CD4-positive, alpha-beta memory T cell (primary cell): ENCODE measurements at regions of chr1 and their contacts with region 1.

Region 1: GRCh38 chr1:202926720-202927491 is at the start of gene KLHL12:
- DNase-seq: peak; percentile 93 to 95 (median 94)
- H3K4me3 ChIP-seq: peak within 1 kb of the TSS; percentile 88 to 98
- H3K4me3 Mint-ChIP-seq: peak within 1 kb of the TSS; percentile 90 to 97 (median 96)
- H3K27ac ChIP-seq: peak within 1 kb of the TSS; percentile 87
- H3K27ac Mint-ChIP-seq: peak within 1 kb of the TSS; percentile 96 to 98 (median 97)
- H3K4me1 ChIP-seq: peaks cover 34% of the 10 kb centered on the region
- H3K4me1 Mint-ChIP-seq: peaks cover 15 to 40% (median 28%) of the 10 kb centered on the region in 4 donors
- H3K27me3 ChIP-seq: no peaks in the 10 kb centered on the region
- H3K27me3 Mint-ChIP-seq: no peaks in the 10 kb centered on the region
- total RNA-seq, gene KLHL12: 24.2 to 27.1 TPM

Region 2: GRCh38 chr1:201108614-201109013 is 1818.3 kb before region 1 on chr1:
- CTCF ChIA-PET with region 1: no interaction called
- POLR2A ChIA-PET with region 1: no interaction called
- intact Hi-C with region 1: no loop called
- DNase-seq: no peak
- H3K4me3 ChIP-seq: no peak overlapping the region
- H3K4me3 Mint-ChIP-seq: no peak overlapping the region
- H3K27ac ChIP-seq: no peak overlapping the region
- H3K27ac Mint-ChIP-seq: peak overlapping the region in 1 of 7 donors; percentile 36
- H3K4me1 ChIP-seq: no peaks in the 10 kb centered on the region
- H3K4me1 Mint-ChIP-seq: peaks cover 0 to 5% (median under 1%) of the 10 kb centered on the region in 4 donors
- H3K27me3 ChIP-seq: no peaks in the 10 kb centered on the region
- H3K27me3 Mint-ChIP-seq: no peaks in the 10 kb centered on the region

Region 3: GRCh38 chr1:202861420-202862200 is 65.3 kb before region 1 on chr1:
- CTCF ChIA-PET with region 1: no interaction called
- POLR2A ChIA-PET with region 1: no interaction called
- intact Hi-C with region 1: no loop called
- DNase-seq: peak in 3 of 5 donors; percentile 6 to 14 (median 8)
- H3K4me3 ChIP-seq: peak overlapping the region; percentile 42 to 75
- H3K4me3 Mint-ChIP-seq: peak overlapping the region; percentile 73 to 87 (median 82)
- H3K27ac ChIP-seq: no peak overlapping the region
- H3K27ac Mint-ChIP-seq: peak overlapping the region in 2 of 7 donors; percentile 25 to 45
- H3K4me1 ChIP-seq: peaks cover 15% of the 10 kb centered on the region
- H3K4me1 Mint-ChIP-seq: peaks cover 6 to 23% (median 10%) of the 10 kb centered on the region in 4 donors
- H3K27me3 ChIP-seq: peaks cover 21% of the 10 kb centered on the region
- H3K27me3 Mint-ChIP-seq: peaks cover 42 to 45% of the 10 kb centered on the region in 2 donors

Region 4: DNA sequence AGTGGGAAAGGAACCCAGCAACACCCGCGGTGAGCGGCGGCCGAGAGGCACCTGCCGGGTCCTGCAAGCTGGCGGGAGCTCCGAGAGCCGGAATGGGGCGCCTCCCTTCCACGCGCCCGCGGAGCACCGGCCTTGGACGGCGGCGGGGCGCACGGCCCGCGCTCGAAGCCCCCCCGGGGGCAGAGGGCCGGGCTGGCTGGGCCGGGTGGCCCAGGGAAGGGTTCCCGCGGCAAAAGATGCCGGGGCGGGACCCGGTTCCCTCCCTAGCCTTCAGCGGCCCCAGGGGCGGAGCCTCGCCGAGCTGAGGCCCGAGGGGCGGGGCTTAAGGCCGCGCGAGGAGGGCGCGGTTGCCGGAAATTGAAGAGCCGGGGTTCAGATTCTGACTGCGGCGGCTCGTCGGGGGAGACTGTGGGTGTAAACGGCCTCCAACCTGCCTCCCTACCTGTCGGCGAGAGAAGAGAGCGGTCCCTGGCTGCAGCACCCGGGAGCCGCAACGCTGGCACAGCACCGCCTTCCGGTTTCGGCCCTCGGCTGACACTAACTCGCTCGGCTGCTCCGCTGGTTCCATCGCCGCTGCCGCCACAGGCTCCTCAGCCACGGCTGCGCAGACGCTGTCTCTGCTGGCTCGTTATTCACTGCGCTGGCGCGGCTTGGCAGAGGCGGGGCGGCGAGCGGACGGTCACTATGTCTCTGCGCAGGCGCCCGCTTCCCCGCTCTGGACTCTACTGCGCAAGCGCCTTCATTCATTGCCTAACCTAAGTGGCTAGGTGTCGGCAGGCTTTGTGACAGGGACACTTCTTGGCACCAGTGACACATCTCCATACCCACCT is 38.2 kb before region 1 on chr1 and contains the start of gene RABIF:
- CTCF ChIA-PET with region 1: no interaction called
- POLR2A ChIA-PET with region 1: interaction called, 8 read pairs
- intact Hi-C with region 1: loop called (anchors 1 kb)
- DNase-seq: peak; percentile 95 to 97 (median 97)
- H3K4me3 ChIP-seq: peak within 1 kb of the TSS; percentile 93 to 95
- H3K4me3 Mint-ChIP-seq: peak within 1 kb of the TSS; percentile 93 to 99 (median 97)
- H3K27ac ChIP-seq: peak within 1 kb of the TSS; percentile 73
- H3K27ac Mint-ChIP-seq: peak within 1 kb of the TSS; percentile 89 to 99 (median 97)
- H3K4me1 ChIP-seq: peaks cover 21% of the 10 kb centered on the region
- H3K4me1 Mint-ChIP-seq: peaks cover 13 to 38% (median 26%) of the 10 kb centered on the region in 4 donors
- H3K27me3 ChIP-seq: no peaks in the 10 kb centered on the region
- H3K27me3 Mint-ChIP-seq: no peaks in the 10 kb centered on the region
- total RNA-seq, gene RABIF: 17.3 to 18.7 TPM

Region 5: DNA sequence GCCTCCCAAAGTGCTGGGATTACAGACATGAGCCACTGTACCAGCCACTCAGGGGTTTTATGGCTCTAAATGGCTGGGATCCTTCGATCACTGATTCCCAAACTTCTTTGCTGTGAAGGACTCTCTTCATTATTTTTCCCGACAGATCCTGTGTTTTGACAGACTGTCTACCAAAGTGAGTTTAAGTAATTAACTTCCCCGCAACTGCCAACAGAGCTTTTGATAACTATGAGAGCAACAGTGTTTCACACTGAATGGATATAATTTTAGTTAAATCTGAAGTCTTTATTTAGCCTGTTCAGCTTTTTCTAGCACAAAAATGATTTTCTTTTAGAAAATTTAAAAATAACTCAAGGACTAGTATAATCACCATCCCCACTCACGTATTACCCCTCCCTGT is 25.4 kb before region 1 on chr1:
- CTCF ChIA-PET with region 1: no interaction called
- POLR2A ChIA-PET with region 1: no interaction called
- intact Hi-C with region 1: no loop called
- DNase-seq: no peak
- H3K4me3 ChIP-seq: no peak overlapping the region
- H3K4me3 Mint-ChIP-seq: no peak overlapping the region
- H3K27ac ChIP-seq: no peak overlapping the region
- H3K27ac Mint-ChIP-seq: no peak overlapping the region
- H3K4me1 ChIP-seq: no peaks in the 10 kb centered on the region
- H3K4me1 Mint-ChIP-seq: peaks cover 0 to 1% (median 0%) of the 10 kb centered on the region in 4 donors
- H3K27me3 ChIP-seq: no peaks in the 10 kb centered on the region
- H3K27me3 Mint-ChIP-seq: no peaks in the 10 kb centered on the region

Region 6: GRCh38 chr1:202952818-202953217 is 25.9 kb after region 1 on chr1:
- CTCF ChIA-PET with region 1: interaction called, 10 read pairs
- POLR2A ChIA-PET with region 1: interaction called, 8 read pairs
- intact Hi-C with region 1: loop called (anchors 1 kb)
- DNase-seq: no peak
- H3K4me3 ChIP-seq: no peak overlapping the region
- H3K4me3 Mint-ChIP-seq: peak overlapping the region in 2 of 8 donors; percentile 2 to 37
- H3K27ac ChIP-seq: no peak overlapping the region
- H3K27ac Mint-ChIP-seq: peak overlapping the region in 3 of 7 donors; percentile 20 to 65 (median 56)
- H3K4me1 ChIP-seq: peaks cover 59% of the 10 kb centered on the region
- H3K4me1 Mint-ChIP-seq: peaks cover 31 to 68% (median 53%) of the 10 kb centered on the region in 4 donors
- H3K27me3 ChIP-seq: no peaks in the 10 kb centered on the region
- H3K27me3 Mint-ChIP-seq: no peaks in the 10 kb centered on the region

Region 7: DNA sequence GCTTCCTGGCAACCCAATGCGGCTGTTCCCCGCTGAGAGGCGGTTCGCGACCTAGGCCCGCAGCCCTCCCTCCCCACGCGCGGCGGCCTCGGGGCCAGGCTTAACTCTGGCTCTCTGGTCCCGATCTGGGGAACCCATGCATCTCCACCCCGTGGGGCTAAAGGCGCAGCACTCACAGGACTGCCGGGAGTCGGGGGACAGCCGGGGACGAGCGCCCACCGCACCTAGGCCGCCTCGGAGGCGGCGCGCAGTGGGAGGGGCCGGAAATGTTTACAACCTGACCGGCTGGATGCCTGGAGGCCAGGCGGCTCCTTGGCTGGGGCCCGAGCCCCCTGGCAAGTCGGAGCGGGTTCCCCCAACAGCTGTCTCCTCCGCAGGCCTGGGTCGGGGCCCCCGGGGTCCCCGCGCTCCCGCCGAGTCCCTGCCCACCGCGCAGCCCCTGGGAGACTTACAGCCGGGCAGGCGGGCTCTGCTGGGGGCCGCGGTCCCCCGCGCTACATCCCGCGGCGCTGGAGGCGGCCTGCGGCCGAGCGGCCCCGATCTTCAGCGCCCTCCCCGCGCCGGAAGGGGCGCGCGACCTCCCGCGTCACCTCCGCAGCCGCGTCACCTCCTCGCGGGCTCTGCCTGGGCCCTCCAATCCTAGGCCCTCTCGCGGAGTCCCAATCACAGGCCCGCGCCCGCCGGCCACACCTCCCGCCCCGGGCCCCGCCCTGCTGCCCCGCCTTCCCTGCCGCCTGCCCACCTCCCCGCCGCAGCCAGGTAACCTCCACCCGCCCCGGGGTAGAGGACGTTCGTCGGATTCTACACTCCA is 31.0 kb after region 1 on chr1 and contains the start of gene ADIPOR1:
- CTCF ChIA-PET with region 1: interaction called, 10 read pairs
- POLR2A ChIA-PET with region 1: interaction called, 8 read pairs
- intact Hi-C with region 1: loop called (anchors 1 kb)
- DNase-seq: peak; percentile 93 to 94 (median 94)
- H3K4me3 ChIP-seq: peak within 1 kb of the TSS; percentile 44 to 78
- H3K4me3 Mint-ChIP-seq: peak within 1 kb of the TSS; percentile 89 to 97 (median 94)
- H3K27ac ChIP-seq: peak within 1 kb of the TSS; percentile 94
- H3K27ac Mint-ChIP-seq: peak within 1 kb of the TSS; percentile 91 to 99 (median 97)
- H3K4me1 ChIP-seq: peaks cover 54% of the 10 kb centered on the region
- H3K4me1 Mint-ChIP-seq: peaks cover 30 to 55% (median 47%) of the 10 kb centered on the region in 4 donors
- H3K27me3 ChIP-seq: no peaks in the 10 kb centered on the region
- H3K27me3 Mint-ChIP-seq: no peaks in the 10 kb centered on the region
- total RNA-seq, gene ADIPOR1: 52.6 to 58.3 TPM

Region 8: DNA sequence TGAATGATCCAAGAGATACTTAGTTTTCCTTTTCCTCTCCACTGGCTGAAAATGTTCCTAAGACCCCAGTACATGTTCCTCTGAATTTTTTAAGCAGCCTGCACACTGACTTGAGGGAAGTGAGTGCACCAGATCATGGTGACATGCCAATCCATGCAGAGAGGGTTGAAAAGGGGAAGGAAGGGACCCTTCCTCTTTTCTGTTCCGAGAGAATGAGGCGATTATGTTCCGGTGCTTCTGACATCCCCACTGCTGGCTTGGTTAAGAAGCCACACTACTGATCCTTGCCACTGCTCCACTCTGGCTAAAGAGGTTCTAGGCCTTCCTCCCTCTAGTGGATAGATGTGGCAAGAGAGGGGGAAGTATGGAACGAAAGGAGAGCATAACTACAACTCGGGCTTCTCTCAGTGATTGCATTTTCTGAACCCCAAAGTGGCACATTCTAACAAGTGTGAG is 42.0 kb after region 1 on chr1:
- CTCF ChIA-PET with region 1: interaction called, 6 read pairs
- POLR2A ChIA-PET with region 1: interaction called, 7 read pairs
- intact Hi-C with region 1: loop called (anchors 1 kb)
- DNase-seq: peak; percentile 21 to 59 (median 29)
- H3K4me3 ChIP-seq: no peak overlapping the region
- H3K4me3 Mint-ChIP-seq: peak overlapping the region in 5 of 8 donors; percentile 9 to 68 (median 35)
- H3K27ac ChIP-seq: peak overlapping the region; percentile 52
- H3K27ac Mint-ChIP-seq: peak overlapping the region; percentile 3 to 87 (median 75)
- H3K4me1 ChIP-seq: peaks cover 29% of the 10 kb centered on the region
- H3K4me1 Mint-ChIP-seq: peaks cover 14 to 36% (median 22%) of the 10 kb centered on the region in 4 donors
- H3K27me3 ChIP-seq: no peaks in the 10 kb centered on the region
- H3K27me3 Mint-ChIP-seq: no peaks in the 10 kb centered on the region

Region 9: GRCh38 chr1:202998836-202999750 is 72.2 kb after region 1 on chr1:
- CTCF ChIA-PET with region 1: interaction called, 8 read pairs
- POLR2A ChIA-PET with region 1: interaction called, 3 read pairs
- intact Hi-C with region 1: loop called (anchors 1 kb)
- DNase-seq: peak; percentile 57 to 69 (median 64)
- H3K4me3 ChIP-seq: no peak overlapping the region
- H3K4me3 Mint-ChIP-seq: peak overlapping the region in 5 of 8 donors; percentile 1 to 52 (median 11)
- H3K27ac ChIP-seq: no peak overlapping the region
- H3K27ac Mint-ChIP-seq: peak overlapping the region in 1 of 7 donors; percentile 10
- H3K4me1 ChIP-seq: peaks cover 4% of the 10 kb centered on the region
- H3K4me1 Mint-ChIP-seq: peaks cover 5 to 12% (median 6%) of the 10 kb centered on the region in 4 donors
- H3K27me3 ChIP-seq: peaks cover 7% of the 10 kb centered on the region
- H3K27me3 Mint-ChIP-seq: peaks cover 15 to 16% of the 10 kb centered on the region in 2 donors

Region 10: DNA sequence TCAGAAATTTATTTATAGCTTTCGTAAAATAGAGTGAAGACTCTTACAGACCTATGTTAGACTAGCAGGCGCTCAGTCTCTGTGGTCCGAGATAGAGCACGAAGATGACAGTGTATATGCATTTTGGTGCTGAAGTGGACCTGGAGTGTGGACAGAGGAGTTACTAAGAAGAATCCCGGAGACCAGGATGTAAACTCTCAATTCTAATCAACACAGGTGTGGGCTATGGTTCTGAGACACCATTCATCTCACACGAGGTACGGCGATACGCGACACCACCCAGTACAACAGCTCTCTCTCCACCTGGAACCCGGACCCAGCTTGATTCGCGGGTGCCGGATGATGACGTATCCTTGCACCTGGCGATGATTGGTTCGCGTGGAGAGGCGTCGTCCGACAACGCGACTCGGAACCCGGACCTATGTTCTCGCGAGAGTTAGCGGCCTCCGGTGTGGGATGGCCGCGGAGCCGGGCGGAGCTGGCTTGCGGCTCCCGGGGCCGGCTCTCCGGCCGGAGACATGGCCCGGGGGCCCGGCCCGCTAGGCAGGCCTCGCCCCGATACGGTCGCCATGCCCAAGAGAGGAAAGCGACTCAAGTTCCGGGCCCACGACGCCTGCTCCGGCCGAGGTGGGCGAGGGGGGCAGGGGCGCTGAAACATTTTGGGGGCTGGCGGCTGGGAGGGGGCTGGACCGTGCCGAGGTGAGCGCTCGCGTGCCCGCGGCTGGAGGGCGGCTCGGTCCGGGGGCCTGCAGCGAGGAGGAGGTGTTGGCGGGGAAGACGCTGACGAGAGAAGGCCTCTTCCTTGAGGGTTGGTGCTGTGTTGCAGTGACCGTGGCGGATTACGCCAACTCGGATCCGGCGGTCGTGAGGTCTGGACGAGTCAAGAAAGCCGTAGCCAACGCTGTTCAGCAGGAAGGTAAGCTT is 80.3 kb after region 1 on chr1 and contains the start of gene TMEM183A:
- CTCF ChIA-PET with region 1: interaction called, 8 read pairs
- POLR2A ChIA-PET with region 1: interaction called, 23 read pairs
- intact Hi-C with region 1: loop called (anchors 1 kb)
- DNase-seq: peak; percentile 92 to 96 (median 93)
- H3K4me3 ChIP-seq: peak within 1 kb of the TSS; percentile 75 to 97
- H3K4me3 Mint-ChIP-seq: peak within 1 kb of the TSS; percentile 91 to 99 (median 94)
- H3K27ac ChIP-seq: peak within 1 kb of the TSS; percentile 93
- H3K27ac Mint-ChIP-seq: peak within 1 kb of the TSS; percentile 97 to 99 (median 98)
- H3K4me1 ChIP-seq: peaks cover 32% of the 10 kb centered on the region
- H3K4me1 Mint-ChIP-seq: peaks cover 18 to 46% (median 33%) of the 10 kb centered on the region in 4 donors
- H3K27me3 ChIP-seq: no peaks in the 10 kb centered on the region
- H3K27me3 Mint-ChIP-seq: no peaks in the 10 kb centered on the region
- total RNA-seq, gene TMEM183A: 69.3 to 70.3 TPM